Cardiac septum (tissue), 1 donor: ENCODE measurements at regions of chr10 and their contacts with region 1.

Region 1: DNA sequence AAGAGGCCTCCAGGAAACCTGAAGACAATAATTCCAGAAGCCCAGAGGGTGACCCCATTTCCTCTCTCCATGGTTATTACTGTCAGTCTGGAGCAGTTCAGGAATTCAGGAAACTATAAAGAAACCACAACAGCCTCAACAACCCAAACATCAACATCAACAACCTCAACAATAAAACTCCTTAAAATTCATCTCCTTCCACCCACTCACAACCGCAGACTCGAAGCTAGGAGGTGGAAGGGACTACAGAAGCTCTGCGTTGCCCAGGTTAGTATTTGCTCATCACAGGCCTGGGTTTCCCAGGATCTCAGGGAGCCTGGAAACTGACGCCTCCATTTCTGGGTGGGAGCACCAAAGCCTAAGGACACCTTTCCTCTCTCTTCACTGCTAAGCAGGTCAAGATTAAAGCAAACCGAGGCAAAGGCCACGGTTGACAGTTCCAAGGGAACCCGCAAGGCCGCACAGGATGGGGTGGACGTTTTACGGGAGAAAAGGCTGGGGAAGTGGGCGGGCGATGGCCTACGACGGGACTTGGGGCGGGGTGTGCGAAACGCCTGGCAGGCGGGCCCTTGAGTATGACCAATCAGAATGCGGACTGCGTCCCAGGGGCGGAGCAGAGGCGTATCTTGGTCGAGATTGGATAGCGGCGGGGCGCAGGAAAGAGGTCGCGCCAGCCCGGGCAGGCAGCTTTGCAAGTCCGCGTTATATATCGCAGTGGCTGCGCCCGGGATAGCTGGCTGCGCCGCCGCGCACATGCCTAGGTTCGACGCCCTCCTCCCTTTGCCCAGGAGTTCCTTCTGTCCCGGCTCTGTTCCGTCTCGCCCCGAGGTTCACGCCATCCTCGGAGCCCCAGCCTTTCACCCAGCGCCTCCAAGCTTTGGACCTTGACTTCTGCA is at the start of gene ELOVL3:
- DNase-seq: peak; percentile 98
- total RNA-seq, gene ELOVL3: not detected

Region 2: DNA sequence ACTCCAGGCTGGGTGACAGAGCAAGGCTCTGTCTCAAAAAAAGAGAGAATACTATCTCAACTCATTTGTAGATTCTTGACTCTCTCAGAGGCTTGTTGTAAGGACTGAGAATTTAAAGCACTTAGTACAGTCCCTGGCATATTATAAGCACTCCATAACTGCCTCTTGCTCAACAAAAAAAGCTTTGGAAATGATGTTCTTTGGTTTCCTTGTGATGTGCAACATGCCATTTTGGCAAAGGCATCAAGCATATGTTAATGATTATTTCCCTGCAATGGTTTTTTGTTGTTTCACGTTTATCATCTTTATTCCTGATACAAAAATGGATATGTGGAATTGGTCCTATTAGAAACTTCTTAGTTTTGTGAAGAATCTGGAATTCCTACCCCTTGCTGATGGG is 58.0 kb before region 1 on chr10:
- intact Hi-C with region 1: loop called (anchors 5 kb)
- DNase-seq: no peak

Region 3: GRCh38 chr10:102352066-102352715 is 126.3 kb after region 1 on chr10:
- intact Hi-C with region 1: loop called (anchors 1 kb)
- DNase-seq: no peak

Region 4: DNA sequence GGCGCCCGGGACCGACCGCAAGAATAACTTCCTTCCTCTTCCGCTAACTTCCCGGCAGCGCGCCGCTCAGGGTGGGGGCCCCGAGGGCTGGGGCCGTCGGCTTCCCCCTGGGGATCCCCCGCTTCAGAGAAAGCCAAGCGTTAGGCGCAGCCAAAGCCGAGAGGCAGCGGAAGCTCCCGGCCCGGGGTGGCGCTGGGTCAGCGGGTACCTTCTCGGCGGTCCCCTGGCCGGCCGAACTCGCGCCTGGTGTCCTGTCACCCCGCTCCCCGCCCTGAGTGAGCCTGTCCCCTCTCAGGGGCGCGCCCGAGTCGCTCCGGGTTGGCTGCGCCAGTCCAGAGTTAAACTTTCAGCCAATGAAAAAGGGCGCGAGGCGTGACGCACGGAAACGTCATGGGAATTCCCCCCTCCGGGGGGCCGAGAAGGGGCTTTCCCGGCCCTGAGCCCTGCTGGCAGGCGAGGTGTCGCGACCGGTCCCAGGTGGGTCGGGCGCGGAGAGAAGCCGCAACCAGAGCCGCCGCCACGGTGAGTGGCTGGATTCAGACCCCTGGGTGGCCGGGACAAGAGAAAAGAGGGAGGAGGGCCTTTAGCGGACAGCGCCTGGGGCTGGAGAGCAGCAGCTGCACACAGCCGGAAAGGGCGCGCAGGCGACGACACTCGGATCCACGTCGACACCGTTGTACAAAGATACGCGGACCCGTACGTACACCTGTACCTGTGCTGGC is 168.3 kb after region 1 on chr10:
- intact Hi-C with region 1: loop called (anchors 2 kb)
- DNase-seq: peak; percentile 99

Region 5: GRCh38 chr10:102660888-102661657 is 435.2 kb after region 1 on chr10:
- intact Hi-C with region 1: no loop called
- DNase-seq: no peak